HEK293 (cell line): ENCODE measurements at regions of chr1 and their contacts with region 1.

Region 1: GRCh38 chr1:35564037-35564883 is 6.7 kb downstream of the NCDN start:
- H3K4me3 ChIP-seq: no peak overlapping the region
- H3K27ac ChIP-seq: no peak overlapping the region
- H3K4me1 ChIP-seq: no peaks in the 10 kb centered on the region
- CTCF ChIP-seq: peak; percentile 64

Region 2: DNA sequence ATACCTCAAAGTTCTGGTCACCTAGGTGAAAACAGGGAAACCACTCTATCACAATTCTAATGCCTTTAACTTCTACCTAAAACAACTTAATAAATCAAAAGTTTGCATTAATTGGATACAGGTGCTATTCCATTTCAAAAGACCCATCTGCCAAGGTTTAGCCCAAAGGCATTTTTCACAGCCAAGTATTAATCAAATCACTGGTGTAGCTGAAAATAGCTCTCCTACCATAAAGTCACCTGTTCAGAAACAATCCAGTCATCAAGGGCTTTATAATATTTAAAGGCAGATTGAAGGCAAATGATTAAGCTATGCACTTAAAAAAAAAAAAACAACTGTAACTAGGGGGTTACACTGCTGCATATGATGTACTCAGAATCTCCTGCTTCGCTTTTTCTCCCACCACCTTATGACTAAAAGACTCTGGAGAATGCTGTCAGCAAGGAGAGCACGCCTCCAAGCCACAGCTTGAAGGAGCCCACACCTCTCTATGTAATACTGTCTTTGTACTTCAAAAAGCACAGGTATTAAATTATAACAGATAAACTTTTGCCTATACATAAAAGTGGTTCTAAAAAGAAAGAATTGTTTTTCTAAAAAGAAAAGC is 27.6 kb before region 1 on chr1:
- CTCF ChIA-PET with region 1: interaction called, 12 read pairs
- POLR2A ChIA-PET with region 1: interaction called, 3 read pairs
- H3K4me3 ChIP-seq: no peak overlapping the region
- H3K27ac ChIP-seq: no peak overlapping the region
- H3K4me1 ChIP-seq: peaks cover 10% of the 10 kb centered on the region
- CTCF ChIP-seq: no peak

Region 3: DNA sequence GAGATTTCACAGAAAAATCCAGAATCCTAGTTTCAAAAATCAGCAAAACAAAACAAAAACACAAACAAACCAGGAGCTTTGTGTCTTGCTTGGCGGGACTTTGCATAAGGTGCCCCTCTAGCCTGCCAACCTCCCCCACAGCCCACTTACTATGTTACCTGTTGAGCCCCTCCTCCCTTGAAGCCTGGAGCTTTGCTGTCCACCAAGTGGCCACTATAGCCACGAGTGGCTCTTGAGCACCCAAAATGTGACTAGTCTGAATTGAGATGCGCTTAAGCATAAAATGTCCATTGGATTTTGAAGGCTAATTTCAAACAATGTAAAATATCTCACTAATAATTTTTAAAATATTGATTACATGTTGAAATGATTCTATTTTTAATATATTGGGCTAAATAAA is 21.0 kb after region 1 on chr1:
- CTCF ChIA-PET with region 1: interaction called, 16 read pairs
- POLR2A ChIA-PET with region 1: no interaction called
- H3K4me3 ChIP-seq: no peak overlapping the region
- H3K27ac ChIP-seq: no peak overlapping the region
- H3K4me1 ChIP-seq: no peaks in the 10 kb centered on the region
- CTCF ChIP-seq: no peak

Region 4: DNA sequence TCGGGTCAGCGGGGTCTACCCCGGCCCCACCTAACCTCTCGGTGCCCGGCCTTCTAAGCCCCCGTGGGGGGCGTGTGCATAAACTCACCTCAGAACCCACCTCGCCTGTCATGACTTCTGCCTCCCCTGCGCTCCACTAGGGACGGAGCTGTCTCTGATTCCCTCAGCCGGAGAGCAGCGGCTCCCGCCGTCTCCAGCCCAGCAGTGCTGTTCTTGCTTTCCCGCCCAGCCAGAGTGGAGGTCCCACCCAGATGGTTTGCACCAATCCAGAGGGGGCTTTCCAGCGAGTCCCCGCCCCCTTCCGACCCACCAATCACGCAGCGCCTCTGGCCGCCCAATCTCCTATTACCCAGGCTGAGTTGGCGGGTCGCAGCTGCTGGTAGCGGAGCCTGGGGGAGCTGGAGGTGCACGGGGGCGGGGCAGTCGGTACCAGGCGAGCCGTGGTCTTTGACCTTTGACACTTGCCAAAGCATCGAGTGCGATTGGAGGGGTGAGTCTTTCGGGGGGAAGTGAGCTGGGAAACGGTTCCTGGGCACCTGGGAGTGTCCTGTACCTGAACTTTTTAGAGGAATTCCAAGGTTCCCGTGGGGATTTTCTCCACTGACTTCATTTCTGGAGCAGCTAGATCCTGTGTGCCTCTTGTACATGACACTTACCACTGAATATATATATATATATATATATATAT is 205.6 kb after region 1 on chr1 and contains the start of gene CLSPN:
- CTCF ChIA-PET with region 1: interaction called, 21 read pairs
- POLR2A ChIA-PET with region 1: interaction called, 6 read pairs
- H3K4me3 ChIP-seq: peak within 1 kb of the TSS; percentile 77
- H3K27ac ChIP-seq: peak within 1 kb of the TSS; percentile 97
- H3K4me1 ChIP-seq: no peaks in the 10 kb centered on the region
- CTCF ChIP-seq: no peak